Activated CD4-positive, alpha-beta T cell treated with anti-CD3 and anti-CD28 coated beads for 36 hours (primary cell): ENCODE measurements at regions of chr18 and their contacts with region 1.

Region 1: GRCh38 chr18:54647176-54647575 is 56.1 kb downstream of the DYNAP start:
- DNase-seq: peak; percentile 21
- ATAC-seq: no peak
- H3K4me3 Mint-ChIP-seq: no peak overlapping the region
- H3K27ac Mint-ChIP-seq: no peak overlapping the region
- H3K4me1 Mint-ChIP-seq: no peaks in the 10 kb centered on the region
- H3K27me3 Mint-ChIP-seq: peaks cover 6% of the 10 kb centered on the region

Region 2: GRCh38 chr18:54392543-54393023 is 254.6 kb before region 1 on chr18:
- CTCF ChIA-PET with region 1: no interaction called
- POLR2A ChIA-PET with region 1: no interaction called
- intact Hi-C with region 1: no loop called
- DNase-seq: no peak
- ATAC-seq: peak; percentile 59
- H3K4me3 Mint-ChIP-seq: no peak overlapping the region
- H3K27ac Mint-ChIP-seq: no peak overlapping the region
- H3K4me1 Mint-ChIP-seq: peaks cover 6% of the 10 kb centered on the region
- H3K27me3 Mint-ChIP-seq: peaks cover 6% of the 10 kb centered on the region

Region 3: DNA sequence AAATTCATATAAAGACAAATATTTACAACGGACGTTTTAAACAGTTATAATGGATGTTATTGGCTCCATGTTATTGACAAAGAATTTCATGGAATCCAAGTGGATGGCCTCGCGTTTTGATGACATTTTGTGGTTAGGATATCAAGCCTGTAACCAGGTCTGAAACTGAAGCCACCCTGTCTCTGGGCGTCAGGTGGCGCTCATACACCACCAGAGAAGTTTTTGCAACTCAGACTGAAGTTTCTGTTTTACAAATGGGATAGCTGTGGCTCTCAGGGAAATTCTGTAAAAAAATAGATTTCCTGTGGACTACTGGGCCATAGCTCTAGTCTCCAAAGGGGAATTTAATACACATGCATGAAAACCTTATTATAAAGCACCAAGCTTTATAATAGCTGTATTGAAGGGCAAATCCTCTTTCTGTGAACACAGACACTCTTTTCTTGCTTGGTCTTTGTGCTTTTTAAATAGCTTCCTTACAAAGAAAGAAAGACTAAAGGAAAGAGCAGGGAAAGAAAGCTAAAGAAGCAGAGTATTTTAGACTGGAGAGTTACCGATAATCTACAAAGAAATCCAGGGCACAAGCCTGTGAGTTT is 202.8 kb before region 1 on chr18:
- CTCF ChIA-PET with region 1: no interaction called
- POLR2A ChIA-PET with region 1: no interaction called
- intact Hi-C with region 1: loop called (anchors 1 to 5 kb)
- DNase-seq: peak; percentile 71
- ATAC-seq: peak; percentile 68
- H3K4me3 Mint-ChIP-seq: no peak overlapping the region
- H3K27ac Mint-ChIP-seq: no peak overlapping the region
- H3K4me1 Mint-ChIP-seq: no peaks in the 10 kb centered on the region
- H3K27me3 Mint-ChIP-seq: peaks cover 10% of the 10 kb centered on the region